Activated B cell treated with CpG ODN at 0.5 μM for 24 hours (primary cell): ENCODE measurements at regions of chr2 and their contacts with region 1.

Region 1: DNA sequence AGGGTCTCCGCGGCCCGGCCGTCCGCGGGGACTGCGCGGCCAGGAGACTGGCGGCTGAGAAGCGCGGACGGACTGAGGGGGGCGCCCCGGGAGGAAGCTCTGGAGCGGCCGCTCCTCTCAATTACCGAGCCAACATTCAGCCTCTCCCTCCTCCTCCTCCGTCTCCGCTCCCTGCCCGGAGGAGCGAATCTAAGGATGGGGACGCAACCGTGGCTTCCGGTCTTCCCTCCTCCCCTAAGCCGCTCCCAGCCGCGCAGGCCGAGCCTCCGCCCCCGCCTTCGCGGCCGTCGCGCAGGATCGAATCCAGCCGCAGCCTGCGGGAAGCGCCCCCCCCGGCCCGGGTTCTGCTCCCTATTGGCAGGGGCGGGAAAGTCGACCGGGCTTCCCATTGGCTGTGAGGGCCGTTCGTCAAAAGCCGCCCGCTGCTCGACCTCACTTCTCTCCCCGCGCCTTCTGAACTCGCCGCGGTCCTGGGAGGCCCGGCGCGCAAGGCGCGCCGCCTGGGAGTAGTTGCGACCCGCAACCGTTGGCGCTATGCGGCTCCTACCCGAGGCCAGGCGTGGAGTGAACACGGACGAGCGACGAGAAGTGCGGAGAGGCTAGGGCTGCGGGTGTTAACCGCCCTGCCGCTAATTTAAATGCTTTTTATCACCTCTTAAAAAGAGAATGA is at the start of gene HNRNPLL:
- DNase-seq: peak; percentile 84
- ATAC-seq: peak; percentile 87
- H3K4me3 Mint-ChIP-seq: peak within 1 kb of the TSS; percentile 89
- H3K27ac Mint-ChIP-seq: peak within 1 kb of the TSS; percentile 65
- H3K4me1 Mint-ChIP-seq: peaks cover 20% of the 10 kb centered on the region
- H3K27me3 Mint-ChIP-seq: peaks cover 38% of the 10 kb centered on the region
- CTCF ChIP-seq: no peak
- total RNA-seq, gene HNRNPLL: 8.6 and 8.8 TPM in 2 replicates

Region 2: GRCh38 chr2:38653715-38654527 is 51.1 kb after region 1 on chr2:
- CTCF ChIA-PET with region 1: no interaction called
- POLR2A ChIA-PET with region 1: no interaction called
- intact Hi-C with region 1: loop called (anchors 5 kb)
- DNase-seq: no peak
- ATAC-seq: peak; percentile 42
- H3K4me3 Mint-ChIP-seq: no peak overlapping the region
- H3K27ac Mint-ChIP-seq: no peak overlapping the region
- H3K4me1 Mint-ChIP-seq: peaks cover 13% of the 10 kb centered on the region
- H3K27me3 Mint-ChIP-seq: peaks cover 7% of the 10 kb centered on the region
- CTCF ChIP-seq: no peak

Region 3: DNA sequence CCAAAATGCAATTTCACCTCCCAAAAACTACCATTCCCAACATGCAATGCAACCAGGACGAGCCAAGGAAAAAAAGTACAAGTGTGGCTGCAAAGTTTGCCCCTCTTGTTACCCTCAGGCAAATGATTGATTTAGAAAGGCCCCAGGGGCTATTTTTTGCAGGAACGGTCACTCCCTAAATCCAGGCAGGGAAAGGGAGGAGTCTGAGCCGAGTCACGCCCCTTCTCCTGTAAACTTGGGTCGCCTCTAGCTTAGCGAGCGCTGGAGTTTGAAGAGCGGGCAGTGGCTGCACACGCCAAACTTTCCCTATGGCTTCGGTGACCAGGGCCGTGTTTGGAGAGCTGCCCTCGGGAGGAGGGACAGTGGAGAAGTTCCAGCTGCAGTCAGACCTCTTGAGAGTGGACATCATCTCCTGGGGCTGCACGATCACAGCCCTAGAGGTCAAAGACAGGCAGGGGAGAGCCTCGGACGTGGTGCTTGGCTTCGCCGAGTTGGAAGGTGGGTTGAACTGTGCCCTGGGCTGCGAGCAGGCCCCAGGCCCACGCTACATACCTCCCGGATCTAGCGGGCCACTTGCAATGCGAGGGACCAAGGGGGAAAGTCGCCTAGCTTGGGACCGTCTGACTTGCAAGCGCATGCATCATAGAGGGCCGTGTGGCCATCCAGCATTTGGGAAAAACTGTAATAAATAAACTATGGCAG is 63.1 kb after region 1 on chr2 and contains the start of gene GALM:
- CTCF ChIA-PET with region 1: interaction called, 3 read pairs
- POLR2A ChIA-PET with region 1: interaction called, 3 read pairs
- intact Hi-C with region 1: loop called (anchors 1 kb)
- DNase-seq: peak; percentile 23
- ATAC-seq: peak; percentile 78
- H3K4me3 Mint-ChIP-seq: peak within 1 kb of the TSS; percentile 80
- H3K27ac Mint-ChIP-seq: peak within 1 kb of the TSS; percentile 59
- H3K4me1 Mint-ChIP-seq: peaks cover 26% of the 10 kb centered on the region
- H3K27me3 Mint-ChIP-seq: no peaks in the 10 kb centered on the region
- CTCF ChIP-seq: no peak
- total RNA-seq, gene GALM: 3.5 and 5.4 TPM in 2 replicates

Region 4: DNA sequence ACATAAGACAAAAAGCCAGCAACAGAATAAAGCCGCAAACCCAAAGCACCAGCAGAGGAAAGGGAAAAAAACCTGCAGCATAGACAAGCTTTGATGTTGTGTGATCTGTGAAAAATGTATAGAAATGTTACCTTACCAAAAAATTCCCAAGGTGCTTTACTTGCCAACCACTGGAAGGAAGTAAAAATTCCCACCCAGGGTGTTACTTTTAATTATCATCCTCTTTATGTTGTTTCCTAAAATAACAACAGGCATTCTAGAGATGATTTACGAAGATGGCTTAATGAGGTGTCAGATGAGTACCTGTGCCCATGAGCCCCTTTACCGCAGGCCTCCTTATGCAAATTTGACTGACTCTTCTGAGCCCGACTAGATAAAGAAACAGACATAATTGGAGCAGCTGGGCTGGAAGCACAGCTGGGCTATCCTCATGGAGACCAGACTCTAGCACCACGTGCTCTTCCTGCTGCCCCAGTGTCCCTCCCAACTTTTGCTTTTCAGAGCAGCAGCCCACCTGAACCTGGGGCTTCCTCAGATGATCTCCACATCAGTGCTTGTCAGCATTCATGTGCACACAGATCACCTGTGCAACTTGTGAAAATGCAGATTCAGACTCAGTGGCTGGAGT is 106.8 kb after region 1 on chr2:
- CTCF ChIA-PET with region 1: no interaction called
- POLR2A ChIA-PET with region 1: no interaction called
- intact Hi-C with region 1: no loop called
- DNase-seq: no peak
- ATAC-seq: no peak
- H3K4me3 Mint-ChIP-seq: no peak overlapping the region
- H3K27ac Mint-ChIP-seq: no peak overlapping the region
- H3K4me1 Mint-ChIP-seq: peaks cover 8% of the 10 kb centered on the region
- H3K27me3 Mint-ChIP-seq: no peaks in the 10 kb centered on the region
- CTCF ChIP-seq: no peak

Region 5: DNA sequence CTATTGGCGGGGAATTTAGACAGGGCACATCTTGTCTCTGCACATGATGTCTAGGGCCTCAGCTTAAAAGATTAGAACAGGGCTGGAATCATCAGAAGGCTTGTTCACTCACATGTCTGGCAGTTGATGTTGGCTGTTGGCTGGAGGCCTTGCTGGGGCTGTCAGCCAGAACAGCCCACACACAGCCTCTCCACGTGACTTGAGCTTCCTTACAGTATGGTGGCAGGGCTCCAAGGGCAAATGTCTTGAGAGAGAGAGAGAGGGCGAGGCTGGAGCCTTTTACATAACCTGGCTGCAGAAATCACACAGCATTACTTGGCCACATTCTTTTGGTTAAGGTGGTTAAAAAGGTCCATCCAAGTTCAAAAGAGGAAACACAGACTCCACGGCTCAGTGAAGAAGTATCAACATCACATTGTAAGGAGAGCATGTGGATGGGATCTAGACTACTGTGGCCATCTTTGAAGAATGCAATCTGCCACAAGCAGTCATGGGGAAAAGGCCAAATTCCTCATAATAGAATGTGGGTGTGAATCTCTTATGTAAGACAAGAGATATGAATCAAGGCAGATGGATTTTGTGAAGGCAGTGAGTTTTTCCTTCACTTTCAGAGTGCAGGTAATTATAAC is 117.9 kb after region 1 on chr2:
- CTCF ChIA-PET with region 1: interaction called, 8 read pairs
- POLR2A ChIA-PET with region 1: interaction called, 3 read pairs
- intact Hi-C with region 1: loop called (anchors 2 kb)
- DNase-seq: no peak
- ATAC-seq: no peak
- H3K4me3 Mint-ChIP-seq: no peak overlapping the region
- H3K27ac Mint-ChIP-seq: no peak overlapping the region
- H3K4me1 Mint-ChIP-seq: peaks cover 32% of the 10 kb centered on the region
- H3K27me3 Mint-ChIP-seq: no peaks in the 10 kb centered on the region
- CTCF ChIP-seq: no peak

Region 6: DNA sequence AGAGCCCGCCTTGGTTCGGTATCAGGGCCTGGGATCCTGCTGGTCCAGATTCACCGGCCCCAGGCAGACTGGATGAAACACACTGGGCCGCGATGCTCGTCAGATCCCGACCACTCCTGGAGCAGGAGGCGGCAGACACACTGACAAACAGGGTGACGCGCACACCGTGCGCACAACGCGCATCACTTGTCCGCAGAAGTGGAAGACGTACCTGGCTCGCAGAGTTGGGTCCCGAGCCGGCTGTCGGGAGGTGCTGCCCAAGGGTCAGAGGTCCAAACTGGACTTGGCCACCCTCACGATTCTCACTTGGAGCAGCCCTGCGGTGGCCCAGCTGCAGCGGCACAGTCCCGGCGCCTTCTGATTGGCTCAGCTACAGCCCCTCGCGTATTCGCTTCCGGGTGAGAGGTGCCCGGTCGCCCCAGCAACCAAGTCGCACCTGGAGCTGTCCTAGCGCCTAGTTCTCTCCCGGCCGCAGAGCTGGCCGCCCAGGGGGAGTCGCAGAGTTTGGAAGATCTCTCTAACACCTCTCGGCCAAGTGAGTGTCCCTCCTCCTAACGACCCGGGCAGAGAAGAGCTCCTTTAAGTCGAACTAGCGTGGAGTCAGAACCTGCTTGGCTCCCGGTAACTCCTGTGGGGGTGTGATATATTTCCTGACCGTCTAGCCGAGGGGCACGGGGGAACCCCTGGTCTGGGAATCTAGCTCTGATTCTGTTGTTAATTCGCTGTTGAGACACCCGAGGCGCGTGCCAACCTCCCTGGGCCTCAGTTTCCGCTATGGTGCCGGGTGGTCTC is 272.9 kb after region 1 on chr2 and contains the starts of genes DHX57 and MORN2:
- CTCF ChIA-PET with region 1: no interaction called
- POLR2A ChIA-PET with region 1: no interaction called
- intact Hi-C with region 1: loop called (anchors 1 kb)
- DNase-seq: peak; percentile 69
- ATAC-seq: peak; percentile 98
- H3K4me3 Mint-ChIP-seq: peak within 1 kb of the TSS; percentile 93
- H3K27ac Mint-ChIP-seq: peak within 1 kb of the TSS; percentile 79
- H3K4me1 Mint-ChIP-seq: peaks cover 22% of the 10 kb centered on the region
- H3K27me3 Mint-ChIP-seq: no peaks in the 10 kb centered on the region
- CTCF ChIP-seq: no peak
- total RNA-seq, gene DHX57: 20.4 and 21.5 TPM in 2 replicates
- total RNA-seq, gene MORN2: 4.1 and 4.8 TPM in 2 replicates